H1 (cell line): ENCODE measurements at regions of chr6 and their contacts with region 1.

Region 1: DNA sequence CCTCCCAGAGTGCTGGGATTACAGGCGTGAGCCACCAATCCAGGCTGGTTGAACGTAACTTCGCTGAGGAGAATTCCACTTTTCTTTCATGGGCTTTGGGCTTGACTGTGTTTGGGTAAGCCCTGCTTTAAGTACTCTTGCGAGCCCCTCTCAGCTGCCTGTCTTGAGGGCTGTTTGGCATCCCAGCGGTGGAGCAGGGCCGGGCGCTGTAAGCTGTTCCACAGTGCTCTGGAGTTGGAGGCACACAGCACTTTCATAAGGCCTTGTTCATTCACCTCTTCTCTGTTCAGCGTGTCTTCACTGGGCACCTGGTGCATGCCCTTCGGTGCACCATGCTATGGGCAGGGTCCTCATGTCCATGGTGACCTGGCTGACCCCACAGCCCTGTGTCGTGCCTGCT is 21.6 kb downstream of the PNLDC1 start:
- DNase-seq: no peak
- H3K4me3 ChIP-seq: no peak overlapping the region
- H3K27ac ChIP-seq: no peak overlapping the region
- H3K4me1 ChIP-seq: peaks cover 0 to 11% (median 5%) of the 10 kb centered on the region in 4 experiments; a peak in 5 of 7 replicates
- H3K27me3 ChIP-seq: no peaks in the 10 kb centered on the region
- CTCF ChIP-seq: no peak
- EP300 ChIP-seq: no peak
- POLR2A ChIP-seq: no peak
- RAD21 ChIP-seq: no peak

Region 2: DNA sequence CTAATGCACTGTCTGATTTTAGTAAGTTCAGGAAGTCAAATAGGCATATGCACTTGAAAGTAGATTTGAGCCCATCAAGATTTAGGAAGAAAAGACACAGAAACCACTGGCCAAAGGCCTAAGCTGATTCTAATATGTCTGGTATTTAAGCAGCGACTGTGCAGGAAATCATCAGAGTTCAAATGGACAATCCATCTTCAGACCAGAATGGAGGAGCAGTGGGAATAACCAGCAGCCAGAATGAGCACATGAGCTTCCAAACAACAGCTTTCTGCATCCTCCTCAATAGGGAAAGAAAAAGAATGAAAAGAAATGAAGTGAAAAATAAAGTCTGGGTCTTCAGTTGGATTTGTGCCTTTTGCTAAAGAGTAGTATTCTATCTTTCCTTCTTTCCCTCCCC is 179.2 kb before region 1 on chr6:
- CTCF ChIA-PET with region 1: no interaction called
- POLR2A ChIA-PET with region 1: no interaction called
- DNase-seq: no peak
- H3K4me3 ChIP-seq: no peak overlapping the region
- H3K27ac ChIP-seq: no peak overlapping the region
- H3K4me1 ChIP-seq: no peaks in the 10 kb centered on the region; a peak in 2 of 7 replicates
- H3K27me3 ChIP-seq: no peaks in the 10 kb centered on the region
- CTCF ChIP-seq: no peak
- EP300 ChIP-seq: no peak
- POLR2A ChIP-seq: no peak
- RAD21 ChIP-seq: no peak

Region 3: DNA sequence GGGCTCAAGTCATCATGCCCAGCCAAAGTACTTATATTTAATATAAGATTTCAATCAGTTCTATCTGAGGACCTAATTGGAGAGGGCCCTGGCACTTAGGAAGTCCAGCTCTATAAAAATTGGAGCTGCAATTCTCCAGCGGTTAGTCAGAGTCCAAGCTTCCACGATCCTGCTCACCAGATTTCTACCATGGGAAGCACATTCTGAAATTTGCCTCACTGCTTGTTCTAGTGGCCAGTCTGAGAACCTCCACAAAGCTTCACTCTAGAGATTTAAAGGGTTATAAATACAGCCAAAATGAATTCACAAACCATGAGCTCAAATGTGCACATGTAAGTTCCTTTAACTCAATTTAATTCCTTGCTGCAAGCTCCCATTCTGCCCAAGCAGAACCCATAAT is 11.8 kb after region 1 on chr6:
- CTCF ChIA-PET with region 1: interaction called, 14 read pairs
- POLR2A ChIA-PET with region 1: interaction called, 4 read pairs
- DNase-seq: no peak
- H3K4me3 ChIP-seq: no peak overlapping the region
- H3K27ac ChIP-seq: no peak overlapping the region
- H3K4me1 ChIP-seq: peaks cover 0 to 20% (median 11%) of the 10 kb centered on the region in 4 experiments; a peak in 6 of 7 replicates
- H3K27me3 ChIP-seq: no peaks in the 10 kb centered on the region; a peak in 1 of 7 replicates
- CTCF ChIP-seq: no peak
- EP300 ChIP-seq: no peak
- POLR2A ChIP-seq: no peak
- RAD21 ChIP-seq: no peak